Activated CD4-positive, alpha-beta memory T cell treated with anti-CD3 and anti-CD28 coated beads for 36 hours (primary cell): ENCODE measurements at regions of chr14 and their contacts with region 1.

Region 1: GRCh38 chr14:75522224-75522982 is at the start of gene BATF:
- DNase-seq: peak; percentile 89
- H3K4me3 Mint-ChIP-seq: peak within 1 kb of the TSS; percentile 99
- H3K27ac Mint-ChIP-seq: peak within 1 kb of the TSS; percentile 100
- H3K4me1 Mint-ChIP-seq: peaks cover 64% of the 10 kb centered on the region
- H3K27me3 Mint-ChIP-seq: no peaks in the 10 kb centered on the region
- total RNA-seq, gene BATF: 171 to 182 TPM

Region 2: GRCh38 chr14:75249251-75249957 is 273.0 kb before region 1 on chr14:
- CTCF ChIA-PET with region 1: no interaction called
- POLR2A ChIA-PET with region 1: no interaction called
- intact Hi-C with region 1: loop called (anchors 5 kb)
- DNase-seq: peak; percentile 93
- H3K4me3 Mint-ChIP-seq: peak overlapping the region; percentile 33
- H3K27ac Mint-ChIP-seq: peak overlapping the region; percentile 64
- H3K4me1 Mint-ChIP-seq: peaks cover 55% of the 10 kb centered on the region
- H3K27me3 Mint-ChIP-seq: peaks cover 4% of the 10 kb centered on the region

Region 3: DNA sequence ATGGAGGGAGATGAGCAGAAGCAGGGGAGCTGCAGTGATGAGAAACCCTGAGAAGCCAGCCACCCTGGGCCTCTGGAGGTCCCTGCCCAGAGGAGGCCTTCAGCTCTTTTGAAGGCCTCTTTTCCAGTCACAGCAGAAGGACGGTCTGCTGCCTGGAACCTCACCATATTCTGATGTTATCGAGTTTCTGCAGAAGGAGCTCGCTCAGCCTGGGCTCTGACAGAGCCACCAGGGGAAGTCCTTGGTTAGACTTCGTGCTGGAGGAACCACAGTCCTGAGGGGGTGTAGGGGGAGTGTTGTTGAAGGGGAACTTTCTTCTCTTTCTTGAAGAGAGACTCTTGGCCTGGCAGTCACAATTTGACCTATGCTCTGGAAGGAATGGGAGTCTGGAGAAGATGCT is 25.2 kb before region 1 on chr14:
- CTCF ChIA-PET with region 1: interaction called, 8 read pairs
- POLR2A ChIA-PET with region 1: interaction called, 31 read pairs
- intact Hi-C with region 1: no loop called
- DNase-seq: peak; percentile 75
- H3K4me3 Mint-ChIP-seq: peak overlapping the region; percentile 59
- H3K27ac Mint-ChIP-seq: peak overlapping the region; percentile 82
- H3K4me1 Mint-ChIP-seq: peaks cover 54% of the 10 kb centered on the region
- H3K27me3 Mint-ChIP-seq: no peaks in the 10 kb centered on the region

Region 4: DNA sequence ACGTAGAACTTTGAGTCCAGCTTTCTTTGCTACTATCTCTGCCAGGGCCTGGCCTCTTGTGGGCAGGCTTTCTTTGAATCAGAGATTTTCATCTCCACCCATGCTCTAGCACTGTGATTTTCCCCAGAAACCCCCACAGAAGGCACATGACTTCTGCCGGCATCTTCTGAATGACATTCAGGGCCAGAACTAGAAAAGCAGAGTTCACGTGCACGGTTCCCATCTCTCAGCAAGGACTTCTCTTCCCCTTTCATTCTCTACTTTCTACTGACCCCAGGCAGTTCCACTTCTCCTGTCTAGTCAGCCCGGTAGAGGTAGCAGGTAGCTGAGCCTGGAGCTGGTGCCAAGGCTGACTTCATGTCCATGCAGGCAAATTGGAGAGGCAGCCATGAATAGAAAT is 26.8 kb after region 1 on chr14:
- CTCF ChIA-PET with region 1: interaction called, 88 read pairs
- POLR2A ChIA-PET with region 1: interaction called, 172 read pairs
- intact Hi-C with region 1: no loop called
- DNase-seq: peak; percentile 75
- H3K4me3 Mint-ChIP-seq: peak overlapping the region; percentile 13
- H3K27ac Mint-ChIP-seq: peak overlapping the region; percentile 94
- H3K4me1 Mint-ChIP-seq: peaks cover 81% of the 10 kb centered on the region
- H3K27me3 Mint-ChIP-seq: no peaks in the 10 kb centered on the region

Region 5: DNA sequence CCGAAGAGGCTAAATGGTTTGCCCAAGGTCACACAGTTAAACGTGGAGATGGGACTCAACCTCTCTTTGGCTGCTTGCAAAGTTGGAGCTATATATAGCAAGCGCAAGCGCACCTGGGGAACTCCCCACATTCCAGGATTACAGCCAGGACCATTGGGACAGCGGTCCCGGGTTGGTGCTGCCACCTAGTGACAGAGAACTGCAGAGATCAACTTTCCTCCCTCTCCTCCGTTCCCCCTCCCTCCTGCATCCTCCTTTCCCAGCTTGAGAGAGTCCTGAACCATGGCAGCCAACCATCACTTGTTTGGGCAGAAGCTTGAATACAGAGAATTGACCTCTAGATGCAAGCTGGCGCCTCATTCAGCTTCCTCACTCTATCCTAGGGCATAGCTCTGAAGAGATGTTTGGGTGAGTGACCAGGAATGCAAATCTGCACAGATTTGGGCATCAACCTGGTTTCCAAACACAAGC is 38.6 kb after region 1 on chr14:
- CTCF ChIA-PET with region 1: interaction called, 83 read pairs
- POLR2A ChIA-PET with region 1: interaction called, 67 read pairs
- intact Hi-C with region 1: loop called (anchors 1 kb)
- DNase-seq: peak; percentile 68
- H3K4me3 Mint-ChIP-seq: no peak overlapping the region
- H3K27ac Mint-ChIP-seq: peak overlapping the region; percentile 97
- H3K4me1 Mint-ChIP-seq: peaks cover 86% of the 10 kb centered on the region
- H3K27me3 Mint-ChIP-seq: no peaks in the 10 kb centered on the region

Region 6: DNA sequence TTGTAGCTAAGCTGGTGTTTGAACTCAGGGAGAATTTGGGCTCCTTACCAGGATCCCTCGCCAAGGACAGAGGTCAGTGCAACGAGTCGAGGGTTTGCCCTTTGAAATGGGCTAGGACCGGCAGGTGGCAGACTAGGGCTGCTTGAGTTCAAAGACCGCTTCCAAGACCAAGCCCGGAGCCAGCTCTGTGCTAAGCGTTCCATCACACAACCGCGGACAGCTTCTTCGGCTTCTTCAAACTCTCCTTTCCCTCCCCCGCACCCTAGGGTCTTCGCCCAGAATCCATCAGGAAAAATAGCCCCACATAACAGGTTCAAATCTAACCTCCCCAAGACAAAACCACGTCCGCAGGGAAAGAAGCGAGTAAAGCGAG is 55.3 kb after region 1 on chr14:
- CTCF ChIA-PET with region 1: interaction called, 31 read pairs
- POLR2A ChIA-PET with region 1: interaction called, 45 read pairs
- intact Hi-C with region 1: no loop called
- DNase-seq: peak; percentile 87
- H3K4me3 Mint-ChIP-seq: peak overlapping the region; percentile 86
- H3K27ac Mint-ChIP-seq: peak overlapping the region; percentile 88
- H3K4me1 Mint-ChIP-seq: peaks cover 13% of the 10 kb centered on the region
- H3K27me3 Mint-ChIP-seq: no peaks in the 10 kb centered on the region

Region 7: DNA sequence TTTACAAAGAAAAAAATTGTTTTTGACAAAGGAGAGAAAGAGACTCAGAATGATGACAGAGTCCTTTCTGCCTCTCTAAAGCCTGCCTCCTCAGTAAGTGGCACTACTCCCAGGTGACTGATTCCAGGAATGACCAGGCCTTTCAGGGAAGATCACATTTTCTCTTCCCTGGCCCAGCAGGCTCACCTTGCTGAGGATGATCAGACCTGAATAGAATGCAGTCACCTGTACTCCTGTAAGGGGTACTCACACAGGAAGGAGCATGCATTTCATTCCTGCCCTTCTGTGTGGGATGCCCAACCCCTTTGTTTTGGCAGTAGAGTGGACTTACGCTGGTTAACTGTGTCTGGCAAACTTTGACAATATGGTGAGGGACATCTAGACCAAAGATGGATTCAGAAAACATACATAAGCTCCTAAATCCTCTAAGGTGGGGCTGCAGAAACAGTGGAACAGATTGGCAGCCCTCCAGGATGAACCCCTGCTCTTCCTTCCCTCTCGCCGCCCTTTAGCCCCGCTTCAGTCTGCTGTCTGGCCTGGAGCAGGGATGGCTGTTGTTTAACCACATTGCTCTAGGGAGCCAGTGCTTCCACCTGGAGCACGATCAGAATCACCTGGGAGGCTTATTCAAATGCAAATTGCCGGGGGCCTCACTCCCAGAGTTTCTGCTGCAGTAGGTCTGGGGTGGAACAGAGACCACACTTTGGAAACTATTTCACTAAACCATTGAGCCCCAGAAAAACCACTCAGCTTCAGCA is 108.5 kb after region 1 on chr14:
- CTCF ChIA-PET with region 1: no interaction called
- POLR2A ChIA-PET with region 1: no interaction called
- intact Hi-C with region 1: no loop called
- DNase-seq: no peak
- H3K4me3 Mint-ChIP-seq: no peak overlapping the region
- H3K27ac Mint-ChIP-seq: no peak overlapping the region
- H3K4me1 Mint-ChIP-seq: no peaks in the 10 kb centered on the region
- H3K27me3 Mint-ChIP-seq: no peaks in the 10 kb centered on the region

Region 8: GRCh38 chr14:75660630-75661494 is 138.5 kb after region 1 on chr14 and contains the starts of genes ERG28 and TTLL5:
- CTCF ChIA-PET with region 1: interaction called, 8 read pairs
- POLR2A ChIA-PET with region 1: interaction called, 4 read pairs
- intact Hi-C with region 1: loop called (anchors 2 kb)
- DNase-seq: peak; percentile 98
- H3K4me3 Mint-ChIP-seq: peak within 1 kb of the TSS; percentile 96
- H3K27ac Mint-ChIP-seq: peak within 1 kb of the TSS; percentile 90
- H3K4me1 Mint-ChIP-seq: peaks cover 34% of the 10 kb centered on the region
- H3K27me3 Mint-ChIP-seq: no peaks in the 10 kb centered on the region
- total RNA-seq, gene ERG28: 25.9 to 26.8 TPM
- total RNA-seq, gene TTLL5: 23.6 to 28.4 TPM

Region 9: GRCh38 chr14:75985618-75986438 is 463.4 kb after region 1 on chr14 and contains the start of gene IFT43:
- CTCF ChIA-PET with region 1: no interaction called
- POLR2A ChIA-PET with region 1: no interaction called
- intact Hi-C with region 1: no loop called
- DNase-seq: peak; percentile 94
- H3K4me3 Mint-ChIP-seq: peak within 1 kb of the TSS; percentile 81
- H3K27ac Mint-ChIP-seq: peak within 1 kb of the TSS; percentile 29
- H3K4me1 Mint-ChIP-seq: peaks cover 26% of the 10 kb centered on the region
- H3K27me3 Mint-ChIP-seq: peaks cover 2% of the 10 kb centered on the region
- total RNA-seq, gene IFT43: 14.1 to 15.0 TPM